A549 (cell line): ENCODE measurements at regions of chr10 and their contacts with region 1.

Region 1: GRCh38 chr10:102245101-102245931 is at the start of gene GBF1:
- DNase-seq: peak; percentile 100
- ATAC-seq: peak; percentile 94
- H3K4me3 ChIP-seq: peak within 1 kb of the TSS; percentile 84
- H3K27ac ChIP-seq: peak within 1 kb of the TSS; percentile 83 to 88
- H3K4me1 ChIP-seq: peaks cover 28% of the 10 kb centered on the region
- CTCF ChIP-seq: no peak
- EP300 ChIP-seq: no peak
- POLR2A ChIP-seq: peak; percentile 91
- RAD21 ChIP-seq: no peak
- polyA plus RNA-seq, gene GBF1: 21.3 and 34.7 TPM in 2 replicates

Region 2: GRCh38 chr10:102220612-102221011 is 24.7 kb before region 1 on chr10:
- CTCF ChIA-PET with region 1: no interaction called
- POLR2A ChIA-PET with region 1: no interaction called
- DNase-seq: no peak
- ATAC-seq: no peak
- H3K4me3 ChIP-seq: no peak overlapping the region
- H3K27ac ChIP-seq: no peak overlapping the region
- H3K4me1 ChIP-seq: peaks cover 3% of the 10 kb centered on the region; the same call in 2 of the 3 replicates
- CTCF ChIP-seq: no peak
- EP300 ChIP-seq: no peak
- POLR2A ChIP-seq: no peak
- RAD21 ChIP-seq: no peak

Region 3: GRCh38 chr10:102262744-102263370 is 17.5 kb after region 1 on chr10:
- CTCF ChIA-PET with region 1: interaction called, 10 read pairs
- POLR2A ChIA-PET with region 1: no interaction called
- DNase-seq: no peak
- ATAC-seq: no peak
- H3K4me3 ChIP-seq: no peak overlapping the region
- H3K27ac ChIP-seq: no peak overlapping the region
- H3K4me1 ChIP-seq: no peaks in the 10 kb centered on the region
- CTCF ChIP-seq: no peak
- EP300 ChIP-seq: no peak
- POLR2A ChIP-seq: no peak
- RAD21 ChIP-seq: no peak